Vagina (tissue), 2 donors: ENCODE measurements at regions of chr3 and their contacts with region 1.

Region 1: DNA sequence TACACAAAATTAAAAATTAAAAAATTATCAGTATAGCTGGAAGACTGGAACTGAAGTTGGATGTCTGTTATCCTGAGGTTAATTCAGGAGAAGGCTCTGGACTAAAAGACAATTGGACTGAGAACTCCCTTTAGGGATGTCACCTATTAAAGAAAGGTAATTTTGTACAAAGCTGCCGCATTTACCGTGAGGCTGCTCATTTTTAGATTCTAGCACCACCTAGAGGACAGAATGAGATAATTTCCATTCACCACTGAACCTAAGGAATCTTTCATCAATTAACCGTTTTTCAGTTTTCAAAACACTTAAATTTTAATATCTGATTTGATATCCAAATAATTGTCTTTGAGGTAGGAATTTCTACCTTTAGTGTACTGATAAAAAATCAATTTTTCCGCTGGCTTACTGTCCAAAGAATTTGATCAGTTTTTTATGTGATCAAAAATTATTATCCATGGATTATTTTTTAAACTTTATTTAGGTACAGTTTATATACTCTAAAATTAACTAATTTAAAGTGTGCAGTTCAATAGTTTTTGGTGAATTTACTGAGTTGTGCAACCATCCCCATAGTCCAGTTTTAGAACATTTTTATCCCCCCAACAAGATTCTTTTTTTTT is 106.7 kb upstream of the TNIK start:
- DNase-seq: no peak
- H3K4me3 ChIP-seq: no peak overlapping the region
- H3K27ac ChIP-seq: no peak overlapping the region
- H3K4me1 ChIP-seq: no peaks in the 10 kb centered on the region
- H3K27me3 ChIP-seq: no peaks in the 10 kb centered on the region
- CTCF ChIP-seq: peak; percentile 39 to 78 (median 71)
- POLR2A ChIP-seq: no peak

Region 2: DNA sequence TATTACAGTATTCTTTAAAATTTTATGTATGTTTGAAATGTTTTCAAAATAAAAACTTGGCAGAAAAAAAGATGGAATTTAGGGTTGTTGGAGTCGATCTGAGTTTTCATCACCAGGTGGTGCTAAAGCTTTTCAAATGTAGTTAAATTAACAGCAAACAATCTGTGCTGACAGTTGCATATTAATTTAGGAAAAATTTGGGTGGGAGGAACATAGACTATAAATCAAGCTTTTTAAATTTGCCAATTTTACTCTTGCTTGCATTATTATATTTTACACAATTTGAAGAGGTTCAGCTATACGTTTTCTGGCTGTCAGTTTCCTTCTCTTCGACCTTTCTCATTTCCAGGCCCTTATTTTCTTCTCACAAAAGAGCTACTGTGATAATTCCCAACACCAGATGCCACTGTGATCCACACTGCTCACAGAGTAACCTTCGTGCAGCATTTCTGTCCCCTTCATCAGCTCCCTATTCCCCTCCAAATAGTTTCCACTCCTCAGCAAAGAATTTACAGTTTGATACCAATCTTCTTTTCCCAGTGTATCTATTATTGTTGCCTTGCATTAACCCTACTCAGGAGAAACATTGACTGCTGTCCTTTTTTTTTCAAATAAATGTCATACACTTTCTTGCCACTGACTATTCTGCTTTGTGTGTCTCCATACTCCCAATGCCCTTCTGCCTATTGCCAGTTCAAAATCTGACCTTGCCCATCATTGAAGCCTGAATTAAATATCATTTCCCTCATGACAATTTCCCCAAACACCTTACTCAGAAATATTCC is 605.1 kb before region 1 on chr3:
- intact Hi-C with region 1: loop called (anchors 5 kb)
- DNase-seq: no peak
- H3K4me3 ChIP-seq: no peak overlapping the region
- H3K27ac ChIP-seq: no peak overlapping the region
- H3K4me1 ChIP-seq: no peaks in the 10 kb centered on the region
- H3K27me3 ChIP-seq: no peaks in the 10 kb centered on the region
- CTCF ChIP-seq: peak; percentile 50 to 66 (median 63)
- POLR2A ChIP-seq: no peak

Region 3: GRCh38 chr3:171049861-171050444 is 517.0 kb before region 1 on chr3:
- intact Hi-C with region 1: loop called (anchors 10 kb)
- DNase-seq: no peak
- H3K4me3 ChIP-seq: no peak overlapping the region
- H3K27ac ChIP-seq: no peak overlapping the region
- H3K4me1 ChIP-seq: no peaks in the 10 kb centered on the region
- H3K27me3 ChIP-seq: no peaks in the 10 kb centered on the region
- CTCF ChIP-seq: peak in 2 of 3 experiments; percentile 30 to 35
- POLR2A ChIP-seq: no peak